ENCODE measurements at regions of chr20 and their contacts with region 1.

Region 1: DNA sequence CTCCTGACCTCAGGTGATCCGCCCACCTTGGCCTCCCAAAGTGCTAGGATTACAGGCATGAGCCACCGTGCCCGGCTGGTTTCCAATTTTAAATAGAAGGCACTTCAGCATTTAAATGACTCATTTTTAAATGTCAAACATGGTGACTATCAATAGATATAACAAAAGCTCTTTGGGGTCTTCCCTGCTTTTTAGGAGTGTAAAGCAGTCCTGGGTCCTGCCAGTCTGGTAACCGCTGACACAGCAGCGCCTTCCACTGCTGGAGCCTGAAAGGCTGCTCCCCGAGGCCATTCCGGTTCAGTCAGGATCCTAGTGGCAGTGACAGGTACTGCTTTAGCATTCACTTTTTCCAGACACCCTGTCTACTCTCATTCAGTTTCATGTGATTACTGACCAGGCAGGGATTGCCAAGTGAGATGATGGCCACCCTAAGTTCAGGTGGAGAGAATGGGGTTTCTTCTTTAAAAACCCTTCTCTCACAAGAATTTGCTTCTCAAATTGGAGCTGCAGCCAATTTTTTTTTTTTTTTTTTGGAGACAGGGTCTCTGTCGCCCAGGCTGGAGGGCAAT is 5.1 kb downstream of the DIDO1 start:
- DNase-seq: peak in 8 of 9 donors; percentile 51 to 78 (median 61)
- ATAC-seq: peak; percentile 69
- H3K4me3 ChIP-seq: peak overlapping the region; percentile 26
- H3K4me3 Mint-ChIP-seq: peak overlapping the region; percentile 76 to 89 (median 84)
- H3K27ac ChIP-seq: peak overlapping the region; percentile 63
- H3K27ac Mint-ChIP-seq: peak overlapping the region; percentile 67 to 94 (median 91)
- H3K4me1 ChIP-seq: peaks cover 74 to 84% of the 10 kb centered on the region in 2 donors
- H3K4me1 Mint-ChIP-seq: peaks cover 69 to 87% (median 82%) of the 10 kb centered on the region in 7 donors
- H3K27me3 ChIP-seq: no peaks in the 10 kb centered on the region
- H3K27me3 Mint-ChIP-seq: no peaks in the 10 kb centered on the region

Region 2: GRCh38 chr20:62907384-62908317 is 13.6 kb before region 1 on chr20:
- CTCF ChIA-PET with region 1: interaction called, 102 read pairs
- POLR2A ChIA-PET with region 1: interaction called, 25 read pairs
- intact Hi-C with region 1: loop called in 1 of 2 experiments (anchors 1 kb)
- DNase-seq: peak in 4 of 9 donors; percentile 27 to 46 (median 40)
- ATAC-seq: peak; percentile 82
- H3K4me3 ChIP-seq: no peak overlapping the region
- H3K4me3 Mint-ChIP-seq: no peak overlapping the region
- H3K27ac ChIP-seq: no peak overlapping the region
- H3K27ac Mint-ChIP-seq: peak overlapping the region in 7 of 9 donors; percentile 19 to 71 (median 51)
- H3K4me1 ChIP-seq: no peaks in the 10 kb centered on the region
- H3K4me1 Mint-ChIP-seq: peaks cover 10 to 42% (median 24%) of the 10 kb centered on the region in 7 donors
- H3K27me3 ChIP-seq: no peaks in the 10 kb centered on the region
- H3K27me3 Mint-ChIP-seq: no peaks in the 10 kb centered on the region

Region 3: GRCh38 chr20:62937366-62938104 is 16.3 kb after region 1 on chr20:
- CTCF ChIA-PET with region 1: interaction called, 6 read pairs
- POLR2A ChIA-PET with region 1: interaction called, 84 read pairs
- intact Hi-C with region 1: loop called in 1 of 2 experiments (anchors 1 kb)
- DNase-seq: peak; percentile 96 to 98 (median 97)
- ATAC-seq: peak; percentile 95
- H3K4me3 ChIP-seq: peak overlapping the region; percentile 94
- H3K4me3 Mint-ChIP-seq: peak overlapping the region in 6 of 10 donors; percentile 94 to 98 (median 96)
- H3K27ac ChIP-seq: peak overlapping the region; percentile 97
- H3K27ac Mint-ChIP-seq: peak overlapping the region; percentile 88 to 98 (median 95)
- H3K4me1 ChIP-seq: peaks cover 34 to 37% of the 10 kb centered on the region in 2 donors
- H3K4me1 Mint-ChIP-seq: peaks cover 26 to 51% (median 40%) of the 10 kb centered on the region in 7 donors
- H3K27me3 ChIP-seq: no peaks in the 10 kb centered on the region
- H3K27me3 Mint-ChIP-seq: no peaks in the 10 kb centered on the region

Region 4: GRCh38 chr20:62987155-62987554 is 66.0 kb after region 1 on chr20:
- CTCF ChIA-PET with region 1: no interaction called
- POLR2A ChIA-PET with region 1: no interaction called
- intact Hi-C with region 1: no loop called
- DNase-seq: no peak
- ATAC-seq: no peak
- H3K4me3 ChIP-seq: no peak overlapping the region
- H3K4me3 Mint-ChIP-seq: no peak overlapping the region
- H3K27ac ChIP-seq: no peak overlapping the region
- H3K27ac Mint-ChIP-seq: no peak overlapping the region
- H3K4me1 ChIP-seq: peaks cover 3 to 5% of the 10 kb centered on the region in 2 donors
- H3K4me1 Mint-ChIP-seq: peaks cover 0 to 14% (median 9%) of the 10 kb centered on the region in 7 donors
- H3K27me3 ChIP-seq: no peaks in the 10 kb centered on the region
- H3K27me3 Mint-ChIP-seq: peaks cover 0 to 25% (median 6%) of the 10 kb centered on the region in 5 donors

Measured in naive thymus-derived CD4-positive, alpha-beta T cell (primary cell).